Activated CD4-positive, alpha-beta T cell treated with anti-CD3 and anti-CD28 coated beads for 36 hours (primary cell): ENCODE measurements at regions of chr11 and their contacts with region 1.

Region 1: DNA sequence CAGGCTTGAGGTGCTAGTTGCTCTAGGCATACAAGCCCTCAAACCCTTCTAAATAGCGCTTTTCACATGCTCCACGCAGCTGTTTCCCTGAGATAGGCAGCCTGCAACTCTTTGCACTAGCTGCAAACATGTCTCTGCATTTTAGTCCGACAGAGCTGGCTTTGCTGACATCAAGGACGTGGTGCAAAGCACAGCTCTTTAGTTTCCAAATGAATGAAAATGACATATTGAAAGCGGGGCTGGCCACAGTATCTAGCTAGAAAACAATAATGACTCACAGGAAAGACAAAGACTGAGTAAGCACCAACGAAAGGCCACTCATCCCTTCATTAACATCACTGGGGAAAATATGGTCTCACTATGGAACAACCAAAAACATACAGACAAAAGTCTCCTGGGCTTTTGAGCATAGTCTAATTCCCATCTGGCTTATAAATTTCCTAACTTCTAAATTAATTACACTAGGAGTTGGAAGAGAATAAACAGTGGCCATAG is 15.3 kb upstream of the ZC3H12C start:
- DNase-seq: peak; percentile 67
- ATAC-seq: peak; percentile 93
- H3K4me3 Mint-ChIP-seq: no peak overlapping the region
- H3K27ac Mint-ChIP-seq: peak overlapping the region; percentile 61
- H3K4me1 Mint-ChIP-seq: peaks cover 17% of the 10 kb centered on the region
- H3K27me3 Mint-ChIP-seq: peaks cover 13% of the 10 kb centered on the region

Region 2: DNA sequence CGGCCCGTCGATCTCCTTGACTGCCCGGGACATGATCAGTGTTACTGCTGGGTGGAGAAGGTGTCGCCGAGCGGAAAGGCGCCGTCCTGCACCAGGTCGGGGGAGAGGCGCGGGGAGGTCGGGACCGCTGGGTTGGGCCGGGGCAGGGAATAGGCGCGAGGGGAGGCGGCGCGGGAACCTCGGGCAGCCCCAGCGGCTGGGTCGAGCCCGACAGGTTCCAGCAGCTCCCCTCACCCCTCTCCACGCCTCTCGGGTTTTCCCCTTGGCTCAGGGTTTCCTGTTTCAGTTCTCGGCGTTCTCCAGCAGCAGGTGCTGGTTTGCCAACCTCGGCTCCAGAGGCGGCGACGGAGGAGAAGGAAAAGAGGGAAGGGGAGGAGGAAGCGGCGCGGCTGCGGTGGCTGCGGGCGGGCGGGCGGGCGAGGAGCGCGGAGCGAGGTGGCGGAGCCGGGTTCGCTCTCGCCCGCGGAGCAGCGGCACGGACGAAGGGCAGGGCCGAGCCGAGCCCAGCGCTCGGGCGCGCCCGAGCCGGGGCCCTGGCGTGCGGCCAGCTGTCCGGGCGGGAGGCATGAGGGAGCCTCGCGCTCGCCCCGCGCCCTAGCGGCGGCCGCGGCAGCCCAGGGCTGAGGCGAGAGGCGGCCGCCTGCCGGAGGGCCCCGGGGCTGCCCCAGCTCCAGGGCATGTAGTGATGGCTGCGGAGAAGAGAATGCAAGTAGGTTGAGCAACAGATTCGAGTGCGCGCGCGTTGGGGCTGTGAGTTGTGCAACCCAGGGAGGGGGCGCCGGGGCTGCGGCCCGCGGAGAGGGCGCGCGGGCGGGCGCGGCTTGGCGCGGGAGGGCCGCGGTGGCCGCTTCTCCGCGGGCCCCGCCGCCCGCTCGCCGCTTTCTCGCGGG is 14.9 kb after region 1 on chr11 and contains the start of gene ZC3H12C:
- CTCF ChIA-PET with region 1: no interaction called
- POLR2A ChIA-PET with region 1: interaction called, 3 read pairs
- intact Hi-C with region 1: loop called in 1 of 2 experiments (anchors 1 kb)
- DNase-seq: peak; percentile 74
- ATAC-seq: peak; percentile 73
- H3K4me3 Mint-ChIP-seq: peak within 1 kb of the TSS; percentile 74
- H3K27ac Mint-ChIP-seq: peak within 1 kb of the TSS; percentile 52
- H3K4me1 Mint-ChIP-seq: peaks cover 10% of the 10 kb centered on the region
- H3K27me3 Mint-ChIP-seq: peaks cover 49% of the 10 kb centered on the region
- total RNA-seq, gene ZC3H12C: 1.6 TPM